SK-N-SH (cell line): ENCODE measurements at regions of chr10 and their contacts with region 1.

Region 1: DNA sequence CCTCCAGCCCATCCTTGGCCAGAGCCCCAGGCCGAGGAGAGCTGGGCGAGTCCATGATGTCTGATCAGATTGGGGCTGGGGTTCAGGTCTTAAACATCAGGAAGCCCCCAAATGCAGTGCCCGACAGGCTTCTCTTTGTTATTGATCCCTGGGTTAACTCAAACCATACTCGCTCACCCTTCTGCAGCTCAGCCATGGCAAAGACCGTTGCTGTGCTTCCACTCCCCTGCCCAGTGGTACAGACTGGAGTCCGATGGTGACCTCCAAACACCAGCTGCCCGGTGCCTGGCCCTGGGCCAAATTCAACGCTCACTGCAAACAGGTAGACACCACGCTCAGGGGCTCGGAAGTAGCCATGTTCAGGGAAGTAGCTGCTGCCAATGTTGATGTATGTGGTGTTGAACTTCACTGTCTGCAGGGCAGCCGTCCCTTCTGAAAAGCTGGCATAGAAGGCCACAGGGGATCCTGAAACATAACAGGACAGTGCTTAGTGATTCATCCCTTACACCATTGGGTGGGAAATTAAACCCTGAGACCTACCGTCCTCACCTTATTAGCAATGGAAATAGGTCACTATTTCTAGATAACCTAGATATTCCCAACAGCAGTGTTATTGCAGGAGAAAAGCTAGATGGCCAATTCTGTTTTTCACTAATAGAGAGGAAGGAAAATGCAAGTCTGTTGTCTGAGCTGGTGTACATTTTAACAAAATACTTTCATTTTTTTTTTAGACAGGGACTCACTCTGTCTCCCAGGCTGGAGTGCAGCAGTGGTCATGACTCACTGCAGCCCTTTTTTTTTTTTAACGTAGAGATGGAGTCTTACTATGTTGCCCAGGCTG is 20.5 kb downstream of the MMRN2 start:
- DNase-seq: no peak
- H3K4me3 ChIP-seq: peak overlapping the region in 1 of 2 experiments; percentile 37; a peak in 1 of 4 replicates
- H3K27ac ChIP-seq: peak overlapping the region in 1 of 2 experiments; percentile 58; a peak in 2 of 4 replicates
- H3K4me1 ChIP-seq: no peaks in the 10 kb centered on the region
- H3K27me3 ChIP-seq: no peaks in the 10 kb centered on the region
- CTCF ChIP-seq: no peak
- EP300 ChIP-seq: no peak
- RAD21 ChIP-seq: no peak

Region 2: DNA sequence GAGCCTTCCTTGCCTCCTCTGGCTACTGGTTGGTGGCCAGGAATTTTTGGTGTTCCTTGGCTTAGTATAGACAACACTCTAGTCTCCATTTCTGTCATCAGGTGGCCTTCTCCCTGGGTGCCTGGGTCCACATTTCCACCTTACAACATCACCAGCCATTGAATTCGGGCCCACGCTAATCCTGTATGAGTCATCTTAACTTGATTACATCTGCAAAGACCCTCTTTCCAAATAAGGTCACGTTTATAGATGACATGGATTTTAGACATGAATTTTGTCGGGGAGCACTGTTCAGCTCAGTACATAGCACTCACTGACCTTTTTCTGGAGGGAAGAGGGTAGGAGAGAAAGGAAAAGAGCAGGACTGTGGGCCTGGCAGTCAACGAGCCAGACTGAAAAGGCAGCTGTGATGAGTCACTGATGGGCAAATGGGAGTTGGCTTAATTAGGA is 18.8 kb before region 1 on chr10:
- CTCF ChIA-PET with region 1: interaction called, 11 read pairs
- POLR2A ChIA-PET with region 1: no interaction called
- DNase-seq: no peak
- H3K4me3 ChIP-seq: no peak overlapping the region
- H3K27ac ChIP-seq: peak overlapping the region in 1 of 2 experiments; percentile 25; a peak in 1 of 4 replicates
- H3K4me1 ChIP-seq: peaks cover 0 to 8% of the 10 kb centered on the region in 2 experiments; a peak in 1 of 4 replicates
- H3K27me3 ChIP-seq: no peaks in the 10 kb centered on the region
- CTCF ChIP-seq: no peak
- EP300 ChIP-seq: no peak
- RAD21 ChIP-seq: no peak

Region 3: DNA sequence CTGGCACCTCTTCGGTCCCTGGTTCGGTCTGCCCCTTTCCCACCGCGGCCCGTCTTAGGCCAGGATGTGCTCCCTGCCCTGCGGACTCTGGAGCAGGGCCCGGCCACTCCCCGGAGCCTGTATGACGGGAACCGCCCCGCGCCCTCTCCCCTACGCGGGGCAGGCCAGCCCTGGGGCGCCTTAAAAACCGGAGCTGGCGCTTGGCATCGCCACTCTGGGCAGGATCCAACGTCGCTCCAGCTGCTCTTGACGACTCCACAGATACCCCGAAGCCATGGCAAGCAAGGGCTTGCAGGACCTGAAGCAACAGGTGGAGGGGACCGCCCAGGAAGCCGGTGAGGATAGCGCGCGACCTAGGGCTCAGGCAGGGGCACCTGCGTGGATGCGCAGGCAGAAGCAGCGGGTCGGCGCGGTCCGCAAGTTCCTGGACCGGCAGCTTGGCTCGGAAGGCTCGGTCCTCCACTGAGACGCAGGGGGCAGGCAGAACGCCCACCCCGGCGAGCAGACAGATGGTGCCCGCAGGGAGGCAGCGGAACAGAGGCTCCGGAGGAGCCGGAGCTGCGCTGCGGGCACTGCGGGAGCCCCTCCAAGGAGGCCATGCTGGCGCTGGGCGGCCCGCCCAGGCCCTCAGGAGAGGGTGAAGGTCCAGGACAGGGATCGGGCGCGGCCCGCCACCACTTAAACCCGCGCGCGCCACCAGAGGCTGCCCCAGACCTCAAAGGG is 31.6 kb after region 1 on chr10 and contains the start of gene ADIRF:
- CTCF ChIA-PET with region 1: interaction called, 23 read pairs
- POLR2A ChIA-PET with region 1: no interaction called
- DNase-seq: no peak
- H3K4me3 ChIP-seq: no peak within 1 kb of the TSS
- H3K27ac ChIP-seq: no peak within 1 kb of the TSS
- H3K4me1 ChIP-seq: peaks cover 0 to 6% of the 10 kb centered on the region in 2 experiments; a peak in 1 of 4 replicates
- H3K27me3 ChIP-seq: no peaks in the 10 kb centered on the region
- CTCF ChIP-seq: no peak
- EP300 ChIP-seq: no peak
- RAD21 ChIP-seq: no peak
- polyA plus RNA-seq, gene ADIRF: not detected in 2 replicates